Mammary epithelial cell (primary cell): ENCODE measurements at regions of chr11 and their contacts with region 1.

Region 1: DNA sequence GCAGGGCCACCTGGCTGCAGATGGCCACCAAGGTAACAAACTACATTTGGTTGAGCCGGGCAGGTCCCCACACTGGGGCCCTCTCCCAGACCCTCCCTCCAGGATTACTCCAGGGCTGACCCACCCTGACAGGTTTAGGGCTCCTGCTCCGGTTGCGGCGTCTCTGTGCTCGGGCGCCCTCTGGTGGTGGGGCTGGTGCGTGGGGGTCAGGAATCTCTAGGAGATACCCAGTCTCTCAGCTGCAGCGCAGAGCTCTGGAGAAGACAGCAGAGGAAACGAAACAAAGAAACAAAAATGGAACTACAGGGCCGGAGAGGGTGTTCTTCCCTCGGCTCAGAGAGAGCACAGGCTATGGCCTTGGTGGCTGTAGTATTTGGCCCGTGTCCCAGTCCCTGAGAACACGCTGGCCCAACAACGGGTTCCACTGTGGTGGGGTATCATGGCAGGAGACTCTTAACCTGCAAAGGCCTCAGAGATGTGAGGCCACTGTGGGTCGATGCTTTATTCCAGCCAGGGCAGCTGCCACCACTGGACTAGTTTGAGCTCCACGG is 2.4 kb downstream of the C11orf96 start:
- DNase-seq: peak; percentile 54
- H3K4me3 ChIP-seq: peak overlapping the region in 1 of 3 experiments; percentile 46
- H3K27ac ChIP-seq: no peak overlapping the region
- H3K4me1 ChIP-seq: peaks cover 24% of the 10 kb centered on the region
- H3K27me3 ChIP-seq: peaks cover 37% of the 10 kb centered on the region
- CTCF ChIP-seq: peak; percentile 57 to 96

Region 2: GRCh38 chr11:43632171-43632570 is 312.7 kb before region 1 on chr11:
- CTCF ChIA-PET with region 1: no interaction called
- dilution Hi-C with region 1: no loop called
- in situ Hi-C with region 1: no loop called
- intact Hi-C with region 1: no loop called
- DNase-seq: peak; percentile 12
- H3K4me3 ChIP-seq: no peak overlapping the region
- H3K27ac ChIP-seq: no peak overlapping the region
- H3K4me1 ChIP-seq: no peaks in the 10 kb centered on the region
- H3K27me3 ChIP-seq: peaks cover 8% of the 10 kb centered on the region
- CTCF ChIP-seq: no peak

Region 3: DNA sequence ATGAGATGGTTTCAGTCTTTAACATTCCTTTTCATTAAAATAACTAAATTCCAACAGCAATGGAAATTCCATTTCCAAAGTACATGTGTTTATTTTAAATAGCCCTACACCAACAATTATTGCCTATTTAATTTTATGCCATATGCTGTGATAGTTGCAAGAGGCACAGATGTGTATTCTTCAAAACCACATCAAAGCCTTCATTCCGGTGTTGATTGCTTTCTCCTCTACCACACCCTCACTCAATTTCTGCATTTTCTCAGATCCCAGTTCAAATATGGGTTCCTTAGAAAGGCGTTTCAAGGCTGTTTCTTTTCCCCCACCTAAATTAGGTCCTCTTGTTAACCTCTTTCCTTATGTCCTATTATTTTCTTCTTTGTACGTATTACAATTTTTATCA is 270.3 kb before region 1 on chr11:
- CTCF ChIA-PET with region 1: no interaction called
- dilution Hi-C with region 1: no loop called
- in situ Hi-C with region 1: no loop called
- intact Hi-C with region 1: no loop called
- DNase-seq: no peak
- H3K4me3 ChIP-seq: no peak overlapping the region
- H3K27ac ChIP-seq: no peak overlapping the region
- H3K4me1 ChIP-seq: no peaks in the 10 kb centered on the region
- H3K27me3 ChIP-seq: peaks cover 5% of the 10 kb centered on the region
- CTCF ChIP-seq: no peak

Region 4: GRCh38 chr11:43825217-43825816 is 119.5 kb before region 1 on chr11:
- CTCF ChIA-PET with region 1: no interaction called
- dilution Hi-C with region 1: loop called (anchors 25 kb)
- in situ Hi-C with region 1: no loop called
- intact Hi-C with region 1: no loop called
- DNase-seq: peak; percentile 20
- H3K4me3 ChIP-seq: no peak overlapping the region
- H3K27ac ChIP-seq: no peak overlapping the region
- H3K4me1 ChIP-seq: peaks cover 8% of the 10 kb centered on the region
- H3K27me3 ChIP-seq: no peaks in the 10 kb centered on the region
- CTCF ChIP-seq: peak; percentile 70 to 74

Region 5: GRCh38 chr11:43866520-43866919 is 78.3 kb before region 1 on chr11:
- CTCF ChIA-PET with region 1: no interaction called
- dilution Hi-C with region 1: no loop called
- in situ Hi-C with region 1: no loop called
- intact Hi-C with region 1: no loop called
- DNase-seq: no peak
- H3K4me3 ChIP-seq: no peak overlapping the region
- H3K27ac ChIP-seq: no peak overlapping the region
- H3K4me1 ChIP-seq: peaks cover 14% of the 10 kb centered on the region
- H3K27me3 ChIP-seq: no peaks in the 10 kb centered on the region
- CTCF ChIP-seq: no peak

Region 6: GRCh38 chr11:43895601-43896000 is 49.2 kb before region 1 on chr11:
- CTCF ChIA-PET with region 1: no interaction called
- dilution Hi-C with region 1: no loop called
- in situ Hi-C with region 1: loop called in 1 of 2 experiments (anchors 5 kb)
- intact Hi-C with region 1: loop called (anchors 1 kb)
- DNase-seq: no peak
- H3K4me3 ChIP-seq: no peak overlapping the region
- H3K27ac ChIP-seq: no peak overlapping the region
- H3K4me1 ChIP-seq: no peaks in the 10 kb centered on the region
- H3K27me3 ChIP-seq: no peaks in the 10 kb centered on the region
- CTCF ChIP-seq: no peak

Region 7: DNA sequence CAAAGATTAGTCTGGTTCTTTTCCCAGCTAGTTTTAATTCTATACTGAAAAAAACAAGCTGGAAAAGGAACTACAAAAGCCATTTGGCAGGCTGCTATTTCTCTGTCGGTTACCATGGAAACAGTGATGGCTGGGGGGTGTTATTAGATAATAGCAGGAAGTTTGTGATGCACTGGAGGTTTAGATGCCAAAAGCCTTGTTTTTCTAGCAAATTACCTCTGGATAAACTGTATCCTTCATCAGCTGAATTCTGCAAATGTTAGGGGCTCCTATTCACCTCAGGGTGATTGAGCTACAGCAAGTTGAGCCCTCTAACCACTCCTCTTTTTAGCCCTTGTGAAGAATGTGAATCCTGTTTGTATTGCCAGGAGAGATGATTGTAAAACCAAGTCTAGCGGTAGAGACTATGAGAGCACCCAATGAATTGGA is 39.0 kb before region 1 on chr11:
- CTCF ChIA-PET with region 1: no interaction called
- dilution Hi-C with region 1: no loop called
- in situ Hi-C with region 1: loop called in 1 of 2 experiments (anchors 5 kb)
- intact Hi-C with region 1: loop called (anchors 5 kb)
- DNase-seq: no peak
- H3K4me3 ChIP-seq: no peak overlapping the region
- H3K27ac ChIP-seq: no peak overlapping the region
- H3K4me1 ChIP-seq: peaks cover 7% of the 10 kb centered on the region
- H3K27me3 ChIP-seq: no peaks in the 10 kb centered on the region
- CTCF ChIP-seq: no peak

Region 8: GRCh38 chr11:43920598-43921419 is 24.0 kb before region 1 on chr11:
- CTCF ChIA-PET with region 1: no interaction called
- dilution Hi-C with region 1: no loop called
- in situ Hi-C with region 1: no loop called
- intact Hi-C with region 1: loop called (anchors 1 kb)
- DNase-seq: peak; percentile 100
- H3K4me3 ChIP-seq: no peak overlapping the region
- H3K27ac ChIP-seq: peak overlapping the region; percentile 70
- H3K4me1 ChIP-seq: peaks cover 21% of the 10 kb centered on the region
- H3K27me3 ChIP-seq: no peaks in the 10 kb centered on the region
- CTCF ChIP-seq: no peak

Region 9: DNA sequence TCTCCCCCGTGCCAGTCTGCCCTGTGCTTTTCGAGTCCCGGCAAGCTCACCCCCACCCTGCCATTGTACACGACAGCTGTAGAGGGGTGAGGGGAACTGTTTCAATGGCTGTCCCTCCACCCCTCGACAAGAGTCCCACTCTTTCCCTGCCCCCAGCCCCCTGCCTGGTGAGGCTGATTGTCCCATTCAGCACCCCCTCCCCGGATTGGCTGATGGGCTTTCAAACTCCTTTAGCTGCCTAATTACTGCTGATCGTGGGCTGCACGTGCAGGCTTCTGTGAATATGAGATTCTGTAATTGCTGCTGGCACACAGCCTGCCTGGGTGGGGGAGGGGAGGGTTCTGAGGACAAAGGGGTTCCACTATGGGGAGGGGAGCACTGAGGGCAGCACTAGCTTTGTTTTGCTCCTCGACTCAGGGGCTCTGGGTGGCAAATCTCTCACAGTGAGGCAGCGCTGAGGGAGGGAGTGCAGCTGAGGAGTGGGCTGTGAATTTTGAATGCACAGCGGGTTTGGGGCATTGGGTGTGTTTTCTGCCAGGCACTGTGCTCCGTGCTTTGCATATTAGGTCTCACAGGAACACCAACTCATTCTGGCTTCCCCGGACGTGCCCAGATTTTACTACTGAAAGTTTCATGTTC is 60.3 kb after region 1 on chr11:
- CTCF ChIA-PET with region 1: no interaction called
- dilution Hi-C with region 1: no loop called
- in situ Hi-C with region 1: no loop called
- intact Hi-C with region 1: no loop called
- DNase-seq: no peak
- H3K4me3 ChIP-seq: no peak overlapping the region
- H3K27ac ChIP-seq: no peak overlapping the region
- H3K4me1 ChIP-seq: no peaks in the 10 kb centered on the region
- H3K27me3 ChIP-seq: no peaks in the 10 kb centered on the region
- CTCF ChIP-seq: no peak

Region 10: DNA sequence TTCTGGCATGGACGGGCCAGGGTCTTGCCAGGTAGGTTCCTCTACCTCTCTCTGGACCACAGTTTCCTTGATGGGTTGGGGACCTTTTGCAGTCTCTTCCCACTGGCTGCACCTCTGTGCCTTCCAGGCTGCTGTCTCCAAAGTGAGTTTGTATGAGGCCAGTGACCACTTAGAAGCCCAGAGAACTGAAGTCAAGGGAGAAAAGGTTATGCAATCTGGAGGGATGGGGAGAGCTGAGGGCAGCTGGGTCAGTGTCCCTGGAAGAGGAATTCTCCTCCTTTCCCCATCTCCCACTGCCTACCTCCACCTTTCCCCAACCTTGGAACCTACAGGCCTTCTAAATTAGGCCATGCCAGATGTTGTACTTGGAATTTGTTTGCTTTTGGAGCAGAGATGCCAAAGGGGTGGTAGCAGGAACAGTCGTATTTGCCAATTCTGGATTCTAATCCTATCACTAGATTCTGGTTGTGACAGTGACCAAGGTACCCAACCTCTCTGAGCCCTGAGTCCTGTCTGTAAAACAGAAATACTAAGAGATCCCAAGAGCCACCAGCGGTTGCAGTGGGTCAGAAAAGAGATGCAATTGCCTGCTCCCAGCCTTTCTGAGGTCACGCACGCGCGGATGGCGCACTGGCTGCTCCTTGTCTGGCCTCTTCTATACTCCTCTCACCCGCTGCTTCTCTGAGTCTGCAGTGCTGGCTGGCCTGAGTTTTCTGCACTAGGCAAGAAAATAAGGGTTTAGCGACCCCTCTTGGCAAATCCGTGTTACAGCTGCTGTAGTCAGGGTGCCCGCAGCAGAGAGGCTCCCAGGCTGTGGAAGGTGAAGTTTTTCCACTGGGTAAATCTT is 92.2 kb after region 1 on chr11:
- CTCF ChIA-PET with region 1: no interaction called
- dilution Hi-C with region 1: no loop called
- in situ Hi-C with region 1: no loop called
- intact Hi-C with region 1: loop called (anchors 1 kb)
- DNase-seq: peak; percentile 51
- H3K4me3 ChIP-seq: no peak overlapping the region
- H3K27ac ChIP-seq: no peak overlapping the region
- H3K4me1 ChIP-seq: no peaks in the 10 kb centered on the region
- H3K27me3 ChIP-seq: no peaks in the 10 kb centered on the region
- CTCF ChIP-seq: peak; percentile 73 to 87